ENCODE measurements at regions of chr1 and their contacts with region 1.

Region 1: GRCh38 chr1:248906009-248906752 is at the start of gene PGBD2:
- DNase-seq: peak; percentile 95
- H3K4me3 Mint-ChIP-seq: peak within 1 kb of the TSS; percentile 85
- H3K27ac Mint-ChIP-seq: peak within 1 kb of the TSS; percentile 98
- H3K4me1 Mint-ChIP-seq: peaks cover 46% of the 10 kb centered on the region
- H3K27me3 Mint-ChIP-seq: peaks cover 17% of the 10 kb centered on the region
- total RNA-seq, gene PGBD2: 6.3 to 6.4 TPM

Region 2: DNA sequence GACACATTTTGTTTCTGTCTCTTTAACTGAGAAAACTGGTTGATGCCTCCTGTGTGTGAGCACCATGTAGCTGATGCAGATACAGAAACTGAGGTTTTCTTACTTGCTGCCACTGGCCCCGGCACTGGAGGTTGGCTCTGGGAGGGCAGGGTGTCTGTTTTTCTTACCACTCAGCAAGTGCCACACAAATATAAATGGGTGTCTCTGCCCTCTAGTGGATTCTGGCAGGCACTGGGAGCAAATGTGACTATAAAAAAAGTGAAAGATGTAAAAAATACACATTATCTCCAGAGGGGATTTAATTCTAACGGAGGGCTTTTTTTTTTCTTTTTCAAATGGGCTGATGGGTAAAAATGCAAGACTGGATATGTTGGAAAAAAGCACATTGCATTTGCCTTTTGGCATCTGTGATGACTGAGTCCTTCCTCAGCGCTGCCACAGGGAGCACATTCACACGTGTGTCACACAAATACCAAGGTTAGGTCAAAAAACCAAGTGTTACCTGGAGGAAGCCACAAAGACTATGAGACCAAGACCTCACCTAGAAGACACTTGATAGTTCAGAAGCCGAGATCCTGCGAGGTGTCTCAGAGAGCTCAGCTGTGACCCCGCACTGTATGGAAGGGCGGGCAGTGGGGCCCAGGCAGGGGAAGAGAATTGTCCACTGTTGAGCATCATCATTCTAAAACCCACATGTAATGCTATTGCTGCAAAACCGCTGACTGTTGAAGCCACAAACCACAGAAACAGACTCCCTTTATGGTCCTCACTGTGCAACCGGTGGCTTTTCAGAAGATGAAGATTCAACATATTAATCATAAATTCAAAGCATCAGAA is 18.7 kb after region 1 on chr1:
- CTCF ChIA-PET with region 1: interaction called, 11 read pairs
- POLR2A ChIA-PET with region 1: no interaction called
- DNase-seq: peak; percentile 73
- H3K4me3 Mint-ChIP-seq: peak overlapping the region; percentile 11
- H3K27ac Mint-ChIP-seq: peak overlapping the region; percentile 69
- H3K4me1 Mint-ChIP-seq: peaks cover 49% of the 10 kb centered on the region
- H3K27me3 Mint-ChIP-seq: peaks cover 6% of the 10 kb centered on the region